Activated CD4-positive, alpha-beta memory T cell treated with anti-CD3 and anti-CD28 coated beads for 36 hours (primary cell): ENCODE measurements at regions of chr7 and their contacts with region 1.

Region 1: DNA sequence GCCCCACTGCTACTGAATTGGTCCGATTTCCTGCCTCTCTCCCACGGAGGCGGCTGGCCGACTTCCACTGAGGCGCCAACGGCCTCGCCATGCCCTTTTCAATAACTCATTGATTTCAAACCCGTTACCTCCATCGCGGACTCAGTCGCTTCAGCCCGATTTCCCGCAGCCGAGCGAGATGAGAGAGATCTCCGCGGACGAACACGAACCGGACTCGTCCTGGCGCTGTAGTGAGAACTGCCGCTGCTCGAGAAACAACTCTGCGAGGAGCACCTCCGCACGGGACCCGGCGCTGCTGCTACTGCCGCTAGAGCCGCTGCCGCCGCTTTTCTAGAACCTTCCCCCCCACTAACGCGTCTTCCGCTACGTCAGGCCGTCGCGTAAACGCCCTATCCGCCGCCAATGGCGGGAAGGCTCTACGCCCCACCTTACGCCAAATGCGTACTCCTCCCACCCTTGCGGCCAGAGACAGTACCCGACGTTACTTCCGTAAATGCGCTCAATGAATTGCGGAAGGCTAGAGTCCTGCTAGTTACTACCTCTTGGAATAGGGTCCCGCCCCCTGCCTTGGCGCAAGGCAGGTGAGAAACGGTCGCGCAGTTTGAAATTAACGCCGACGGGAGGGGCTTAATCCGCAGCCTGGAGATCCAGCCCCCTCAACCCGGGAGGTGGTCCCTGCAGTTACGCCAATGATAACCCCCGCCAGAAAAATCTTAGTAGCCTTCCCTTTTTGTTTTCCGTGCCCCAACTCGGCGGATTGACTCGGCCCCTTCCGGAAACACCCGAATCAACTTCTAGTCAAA is at the start of gene HNRNPA2B1:
- DNase-seq: peak; percentile 98
- H3K4me3 Mint-ChIP-seq: peak within 1 kb of the TSS; percentile 99
- H3K27ac Mint-ChIP-seq: peak within 1 kb of the TSS; percentile 100
- H3K4me1 Mint-ChIP-seq: peaks cover 39% of the 10 kb centered on the region
- H3K27me3 Mint-ChIP-seq: peaks cover 6% of the 10 kb centered on the region
- total RNA-seq, gene HNRNPA2B1: 906 to 929 TPM

Region 2: GRCh38 chr7:25862260-25863037 is 338.2 kb before region 1 on chr7:
- CTCF ChIA-PET with region 1: no interaction called
- POLR2A ChIA-PET with region 1: interaction called, 5 read pairs
- intact Hi-C with region 1: loop called (anchors 2 kb)
- DNase-seq: peak; percentile 98
- H3K4me3 Mint-ChIP-seq: peak overlapping the region; percentile 65
- H3K27ac Mint-ChIP-seq: peak overlapping the region; percentile 60
- H3K4me1 Mint-ChIP-seq: peaks cover 22% of the 10 kb centered on the region
- H3K27me3 Mint-ChIP-seq: peaks cover 69% of the 10 kb centered on the region

Region 3: GRCh38 chr7:26117142-26117807 is 83.4 kb before region 1 on chr7:
- CTCF ChIA-PET with region 1: no interaction called
- POLR2A ChIA-PET with region 1: no interaction called
- intact Hi-C with region 1: no loop called
- DNase-seq: peak; percentile 45
- H3K4me3 Mint-ChIP-seq: no peak overlapping the region
- H3K27ac Mint-ChIP-seq: no peak overlapping the region
- H3K4me1 Mint-ChIP-seq: peaks cover 7% of the 10 kb centered on the region
- H3K27me3 Mint-ChIP-seq: peaks cover 3% of the 10 kb centered on the region

Region 4: DNA sequence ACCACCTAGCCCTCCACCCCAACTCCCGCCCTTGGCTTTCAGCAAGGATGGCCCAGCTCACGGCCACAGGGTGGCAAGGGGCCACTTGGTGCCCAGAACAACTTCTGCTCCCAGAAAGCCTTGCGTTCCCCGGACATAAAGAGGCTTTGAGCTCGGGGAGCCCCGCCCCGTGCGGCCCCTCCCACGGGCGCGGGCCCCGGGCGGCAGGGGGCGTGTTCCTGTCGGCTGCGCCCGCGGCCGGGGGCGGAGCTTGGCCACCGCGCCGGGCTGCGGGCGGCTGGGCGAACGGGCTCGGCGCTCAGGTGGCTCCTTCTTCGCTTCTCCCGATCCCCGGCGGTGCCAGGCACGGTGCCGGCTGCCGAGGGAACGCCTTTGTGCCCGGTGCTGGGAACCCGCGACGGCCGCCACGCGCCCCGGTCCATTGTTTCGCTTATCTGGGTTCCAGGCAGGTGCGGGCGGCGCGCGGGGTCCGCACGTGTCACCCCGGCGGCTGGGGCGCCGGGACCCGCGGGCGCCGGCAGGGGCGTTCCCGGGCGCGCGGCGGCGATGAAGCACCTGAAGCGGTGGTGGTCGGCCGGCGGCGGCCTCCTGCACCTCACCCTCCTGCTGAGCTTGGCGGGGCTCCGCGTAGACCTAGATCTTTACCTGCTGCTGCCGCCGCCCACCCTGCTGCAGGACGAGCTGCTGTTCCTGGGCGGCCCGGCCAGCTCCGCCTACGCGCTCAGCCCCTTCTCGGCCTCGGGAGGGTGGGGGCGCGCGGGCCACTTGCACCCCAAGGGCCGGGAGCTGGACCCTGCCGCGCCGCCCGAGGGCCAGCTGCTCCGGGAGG is 48.5 kb before region 1 on chr7 and contains the start of gene NFE2L3:
- CTCF ChIA-PET with region 1: interaction called, 15 read pairs
- POLR2A ChIA-PET with region 1: interaction called, 160 read pairs
- intact Hi-C with region 1: loop called (anchors 1 kb)
- DNase-seq: peak; percentile 90
- H3K4me3 Mint-ChIP-seq: peak within 1 kb of the TSS; percentile 98
- H3K27ac Mint-ChIP-seq: peak within 1 kb of the TSS; percentile 92
- H3K4me1 Mint-ChIP-seq: peaks cover 51% of the 10 kb centered on the region
- H3K27me3 Mint-ChIP-seq: no peaks in the 10 kb centered on the region
- total RNA-seq, gene NFE2L3: 27.3 to 30.3 TPM

Region 5: GRCh38 chr7:26278770-26279169 is 78.1 kb after region 1 on chr7:
- CTCF ChIA-PET with region 1: no interaction called
- POLR2A ChIA-PET with region 1: interaction called, 4 read pairs
- intact Hi-C with region 1: loop called (anchors 2 kb)
- DNase-seq: no peak
- H3K4me3 Mint-ChIP-seq: no peak overlapping the region
- H3K27ac Mint-ChIP-seq: no peak overlapping the region
- H3K4me1 Mint-ChIP-seq: peaks cover 24% of the 10 kb centered on the region
- H3K27me3 Mint-ChIP-seq: peaks cover 3% of the 10 kb centered on the region

Region 6: DNA sequence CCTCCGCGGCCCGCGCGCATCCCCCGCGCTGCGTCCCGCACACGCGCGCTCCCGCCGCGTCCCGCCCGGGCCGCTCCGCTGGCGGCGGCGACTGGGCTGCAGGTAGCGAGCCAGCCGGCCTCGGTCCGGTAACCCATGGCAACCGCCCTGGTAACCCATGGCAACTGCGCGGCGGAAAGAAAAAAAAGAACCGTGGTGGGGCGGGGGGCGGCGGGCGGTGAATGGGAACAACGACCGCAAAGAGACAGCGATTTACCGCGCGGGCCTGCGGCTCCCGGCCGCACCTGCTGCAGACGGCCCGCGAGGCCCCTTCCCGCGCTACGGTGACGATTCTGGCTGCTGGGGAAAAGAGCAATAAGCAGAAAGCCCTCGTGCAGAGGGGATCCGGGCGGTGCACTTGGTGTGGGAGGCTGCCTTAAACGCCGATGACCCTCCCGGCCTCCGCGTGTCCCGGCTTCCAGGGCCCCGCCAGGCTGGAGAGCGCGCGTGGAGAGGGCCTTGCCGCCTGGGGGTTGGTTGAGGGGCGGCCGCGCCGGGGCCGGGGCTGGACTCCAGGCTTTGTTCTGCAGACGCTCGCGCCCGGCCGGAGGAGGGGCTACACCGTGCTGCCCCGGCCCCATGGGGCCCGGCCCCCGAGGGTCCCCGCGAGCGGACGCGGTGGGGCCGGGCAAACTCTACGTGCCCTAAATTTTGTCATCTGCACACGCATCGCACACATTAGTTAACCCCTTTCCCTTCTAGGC is 175.7 kb after region 1 on chr7:
- CTCF ChIA-PET with region 1: no interaction called
- POLR2A ChIA-PET with region 1: no interaction called
- intact Hi-C with region 1: loop called (anchors 5 kb)
- DNase-seq: peak; percentile 56
- H3K4me3 Mint-ChIP-seq: peak overlapping the region; percentile 73
- H3K27ac Mint-ChIP-seq: no peak overlapping the region
- H3K4me1 Mint-ChIP-seq: no peaks in the 10 kb centered on the region
- H3K27me3 Mint-ChIP-seq: peaks cover 27% of the 10 kb centered on the region